CD4-positive, alpha-beta T cell (primary cell): ENCODE measurements at regions of chr20 and their contacts with region 1.

Region 1: DNA sequence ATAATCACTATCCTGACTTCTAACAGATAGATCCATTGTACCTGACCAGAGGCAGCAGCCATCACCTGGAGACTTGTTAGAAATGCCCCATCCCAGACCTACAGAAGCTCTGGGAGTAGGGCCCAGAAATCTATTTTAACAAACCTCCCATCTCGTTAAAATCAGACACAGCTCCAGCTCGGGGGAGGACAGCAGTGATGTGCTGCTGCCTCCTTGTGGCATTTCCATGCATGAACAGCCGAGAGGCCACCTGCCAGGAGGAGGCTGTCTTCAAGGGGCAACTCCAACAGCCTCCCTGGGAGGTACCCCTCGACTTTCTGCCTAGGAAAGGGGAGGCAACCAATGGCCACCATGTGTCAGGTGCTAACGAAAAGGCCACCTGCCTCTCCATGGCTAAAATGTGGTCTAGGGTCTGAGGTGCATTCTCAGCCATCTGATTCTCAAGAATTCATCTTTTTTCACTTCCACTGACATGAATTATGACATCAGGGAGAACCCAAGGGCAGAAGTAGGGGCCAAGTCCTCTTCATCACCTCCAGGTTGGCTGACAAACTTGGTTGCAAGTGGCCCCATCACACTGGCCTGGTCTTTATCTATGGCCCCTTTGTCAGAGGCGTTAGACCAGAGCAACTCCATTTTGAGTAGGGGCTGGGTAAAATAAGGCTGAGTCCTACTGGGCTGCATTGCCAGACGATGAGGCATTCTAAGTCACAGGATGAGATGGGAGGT is 12.2 kb upstream of the KCNK15 start:
- DNase-seq: peak; percentile 38 to 81 (median 50)
- ATAC-seq: peak; percentile 74
- H3K4me3 ChIP-seq: no peak overlapping the region
- H3K4me3 Mint-ChIP-seq: no peak overlapping the region
- H3K27ac ChIP-seq: no peak overlapping the region
- H3K27ac Mint-ChIP-seq: no peak overlapping the region
- H3K4me1 ChIP-seq: peaks cover 14% of the 10 kb centered on the region
- H3K4me1 Mint-ChIP-seq: peaks cover 11% of the 10 kb centered on the region
- H3K27me3 ChIP-seq: no peaks in the 10 kb centered on the region
- H3K27me3 Mint-ChIP-seq: no peaks in the 10 kb centered on the region
- CTCF ChIP-seq: peak; percentile 65

Region 2: GRCh38 chr20:44115762-44116644 is 617.5 kb before region 1 on chr20:
- CTCF ChIA-PET with region 1: no interaction called
- POLR2A ChIA-PET with region 1: no interaction called
- intact Hi-C with region 1: loop called in 1 of 2 experiments (anchors 2 kb)
- DNase-seq: no peak
- ATAC-seq: peak; percentile 21
- H3K4me3 ChIP-seq: no peak overlapping the region
- H3K4me3 Mint-ChIP-seq: no peak overlapping the region
- H3K27ac ChIP-seq: no peak overlapping the region
- H3K27ac Mint-ChIP-seq: no peak overlapping the region
- H3K4me1 ChIP-seq: peaks cover 4% of the 10 kb centered on the region
- H3K4me1 Mint-ChIP-seq: peaks cover 9% of the 10 kb centered on the region
- H3K27me3 ChIP-seq: peaks cover 19 to 20% of the 10 kb centered on the region in 2 experiments
- H3K27me3 Mint-ChIP-seq: peaks cover 53% of the 10 kb centered on the region
- CTCF ChIP-seq: no peak

Region 3: GRCh38 chr20:44388466-44389023 is 345.0 kb before region 1 on chr20:
- CTCF ChIA-PET with region 1: interaction called, 3 read pairs
- POLR2A ChIA-PET with region 1: no interaction called
- intact Hi-C with region 1: loop called (anchors 1 kb)
- DNase-seq: peak; percentile 39 to 85 (median 56)
- ATAC-seq: peak; percentile 92
- H3K4me3 ChIP-seq: no peak overlapping the region
- H3K4me3 Mint-ChIP-seq: no peak overlapping the region
- H3K27ac ChIP-seq: no peak overlapping the region
- H3K27ac Mint-ChIP-seq: no peak overlapping the region
- H3K4me1 ChIP-seq: peaks cover 8% of the 10 kb centered on the region
- H3K4me1 Mint-ChIP-seq: peaks cover 15% of the 10 kb centered on the region
- H3K27me3 ChIP-seq: peaks cover 4% of the 10 kb centered on the region in 2 experiments
- H3K27me3 Mint-ChIP-seq: peaks cover 8% of the 10 kb centered on the region
- CTCF ChIP-seq: peak; percentile 66

Region 4: DNA sequence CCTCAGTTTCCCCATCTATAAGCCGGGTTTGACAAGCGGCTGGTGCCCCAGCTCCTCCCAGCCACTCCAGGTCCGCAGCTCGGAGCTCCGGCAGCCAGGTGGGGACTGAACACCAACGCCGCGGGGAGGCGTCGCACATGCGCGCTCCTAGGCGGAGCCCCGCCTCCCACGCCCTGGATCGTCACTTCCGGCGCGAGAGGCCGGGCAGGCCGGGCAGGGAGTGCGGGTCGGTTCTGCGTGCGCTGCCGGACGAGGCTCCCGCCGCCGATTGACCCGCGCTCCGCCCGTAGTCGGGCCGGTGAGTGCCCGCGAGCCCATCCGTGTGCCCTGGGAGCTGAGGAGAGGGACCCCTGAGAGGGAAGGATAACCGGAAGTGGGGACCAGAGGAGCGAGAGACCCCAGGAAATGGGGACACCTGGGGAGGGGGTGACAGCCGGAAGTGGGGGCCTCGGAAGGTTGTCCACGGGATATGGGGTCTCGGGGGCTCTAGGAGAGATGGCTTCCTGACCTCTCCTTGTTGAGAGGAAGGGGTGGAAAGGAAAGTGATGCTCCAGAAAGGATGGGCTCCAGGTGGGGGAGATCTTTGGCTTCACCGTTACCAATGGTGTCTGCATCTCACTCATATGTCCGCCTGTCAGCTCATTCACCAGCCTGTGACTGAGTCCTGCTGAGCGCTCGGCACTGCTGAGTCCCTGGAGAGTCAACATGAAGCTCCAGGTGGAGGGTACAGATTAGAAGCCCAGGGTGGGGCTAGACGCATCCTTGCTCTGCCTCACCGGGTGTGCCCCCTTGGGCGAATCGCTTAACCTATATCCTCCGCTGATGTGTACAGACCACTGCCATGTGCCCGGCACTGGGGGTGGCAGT is 257.6 kb before region 1 on chr20 and contains the start of gene TTPAL:
- CTCF ChIA-PET with region 1: no interaction called
- POLR2A ChIA-PET with region 1: no interaction called
- intact Hi-C with region 1: loop called in 1 of 2 experiments (anchors 10 kb)
- DNase-seq: peak; percentile 75 to 95 (median 86)
- ATAC-seq: peak; percentile 95
- H3K4me3 ChIP-seq: peak within 1 kb of the TSS; percentile 90
- H3K4me3 Mint-ChIP-seq: peak within 1 kb of the TSS; percentile 95
- H3K27ac ChIP-seq: peak within 1 kb of the TSS; percentile 89 to 98
- H3K27ac Mint-ChIP-seq: peak within 1 kb of the TSS; percentile 96
- H3K4me1 ChIP-seq: peaks cover 18% of the 10 kb centered on the region
- H3K4me1 Mint-ChIP-seq: peaks cover 26% of the 10 kb centered on the region
- H3K27me3 ChIP-seq: no peaks in the 10 kb centered on the region
- H3K27me3 Mint-ChIP-seq: no peaks in the 10 kb centered on the region
- CTCF ChIP-seq: no peak
- total RNA-seq, gene TTPAL: 9.0 to 9.9 TPM

Region 5: DNA sequence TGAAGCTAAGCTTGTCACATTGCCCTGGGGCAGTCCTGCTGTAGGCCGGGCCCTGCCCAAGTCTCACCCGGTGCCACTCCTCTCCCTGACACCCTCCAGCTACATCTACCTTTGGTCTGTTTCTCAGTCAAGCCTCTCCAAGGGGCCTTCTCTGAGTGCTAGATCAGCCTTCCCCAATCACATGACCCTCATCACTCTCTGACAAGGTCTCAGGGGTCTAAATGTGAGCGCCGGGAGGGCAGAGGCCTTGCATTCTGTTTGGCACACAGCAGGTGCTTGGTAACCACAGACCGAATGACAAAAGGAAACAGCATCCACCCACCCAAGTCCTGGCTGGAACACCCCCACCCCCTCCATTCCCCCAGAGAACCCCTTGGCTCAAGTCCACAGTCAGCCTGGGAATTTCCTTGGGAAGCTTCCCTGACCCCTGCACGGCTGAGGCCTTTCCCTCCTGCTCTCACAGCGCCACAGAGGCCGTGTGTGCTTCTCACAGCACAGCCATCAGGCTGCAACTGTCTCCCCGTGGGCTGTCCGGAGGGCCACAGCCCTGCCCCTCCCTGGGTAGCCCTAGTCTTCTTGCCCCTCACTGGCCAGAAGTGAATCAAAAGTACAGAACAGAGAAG is 118.2 kb before region 1 on chr20:
- CTCF ChIA-PET with region 1: no interaction called
- POLR2A ChIA-PET with region 1: no interaction called
- intact Hi-C with region 1: loop called in 1 of 2 experiments (anchors 5 kb)
- DNase-seq: peak in 3 of 14 experiments; percentile 8 to 33 (median 27)
- ATAC-seq: no peak
- H3K4me3 ChIP-seq: no peak overlapping the region
- H3K4me3 Mint-ChIP-seq: peak overlapping the region; percentile 69
- H3K27ac ChIP-seq: peak overlapping the region; percentile 11 to 29
- H3K27ac Mint-ChIP-seq: peak overlapping the region; percentile 98
- H3K4me1 ChIP-seq: peaks cover 66% of the 10 kb centered on the region
- H3K4me1 Mint-ChIP-seq: peaks cover 83% of the 10 kb centered on the region
- H3K27me3 ChIP-seq: no peaks in the 10 kb centered on the region
- H3K27me3 Mint-ChIP-seq: no peaks in the 10 kb centered on the region
- CTCF ChIP-seq: no peak